Naive thymus-derived CD4-positive, alpha-beta T cell (primary cell): ENCODE measurements at regions of chr19 and their contacts with region 1.

Region 1: DNA sequence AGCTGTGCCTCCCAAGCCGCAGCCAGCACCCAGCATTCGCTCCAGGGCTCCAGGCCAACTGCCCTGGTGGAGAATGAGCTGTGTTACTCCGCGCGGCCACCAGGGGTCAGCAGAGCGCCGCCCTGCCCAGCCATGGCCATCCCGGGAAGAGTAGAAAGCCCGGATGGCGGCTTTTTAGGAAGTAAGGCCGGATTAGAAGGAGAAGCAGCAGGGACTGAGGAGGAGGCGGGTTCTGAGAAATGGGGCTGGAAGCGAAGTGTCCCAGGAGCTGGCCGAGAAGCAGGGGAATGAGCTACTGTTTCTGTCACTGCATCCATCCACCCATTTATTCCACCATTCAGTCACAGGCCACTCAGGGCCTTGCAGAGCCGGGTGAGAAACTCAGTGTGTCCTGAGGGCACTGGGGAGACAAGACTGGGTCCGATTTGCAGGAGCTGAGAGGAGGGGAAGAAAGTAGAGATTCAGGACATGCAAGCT is 6.6 kb upstream of the NPAS1 start:
- DNase-seq: peak in 8 of 9 donors; percentile 30 to 76 (median 55)
- ATAC-seq: peak; percentile 92
- H3K4me3 ChIP-seq: no peak overlapping the region
- H3K4me3 Mint-ChIP-seq: peak overlapping the region in 1 of 10 donors; percentile 12
- H3K27ac ChIP-seq: no peak overlapping the region
- H3K27ac Mint-ChIP-seq: peak overlapping the region in 1 of 9 donors; percentile 71
- H3K4me1 ChIP-seq: peaks cover 0 to 3% of the 10 kb centered on the region in 2 donors
- H3K4me1 Mint-ChIP-seq: peaks cover 5 to 11% (median 9%) of the 10 kb centered on the region in 7 donors
- H3K27me3 ChIP-seq: no peaks in the 10 kb centered on the region
- H3K27me3 Mint-ChIP-seq: peaks cover 9 to 21% (median 11%) of the 10 kb centered on the region in 5 donors

Region 2: GRCh38 chr19:46970815-46971214 is 42.3 kb before region 1 on chr19:
- CTCF ChIA-PET with region 1: no interaction called
- POLR2A ChIA-PET with region 1: no interaction called
- intact Hi-C with region 1: no loop called
- DNase-seq: no peak
- ATAC-seq: no peak
- H3K4me3 ChIP-seq: no peak overlapping the region
- H3K4me3 Mint-ChIP-seq: no peak overlapping the region
- H3K27ac ChIP-seq: no peak overlapping the region
- H3K27ac Mint-ChIP-seq: no peak overlapping the region
- H3K4me1 ChIP-seq: peaks cover 11 to 26% of the 10 kb centered on the region in 2 donors
- H3K4me1 Mint-ChIP-seq: peaks cover 17 to 28% (median 21%) of the 10 kb centered on the region in 7 donors
- H3K27me3 ChIP-seq: no peaks in the 10 kb centered on the region
- H3K27me3 Mint-ChIP-seq: no peaks in the 10 kb centered on the region

Region 3: DNA sequence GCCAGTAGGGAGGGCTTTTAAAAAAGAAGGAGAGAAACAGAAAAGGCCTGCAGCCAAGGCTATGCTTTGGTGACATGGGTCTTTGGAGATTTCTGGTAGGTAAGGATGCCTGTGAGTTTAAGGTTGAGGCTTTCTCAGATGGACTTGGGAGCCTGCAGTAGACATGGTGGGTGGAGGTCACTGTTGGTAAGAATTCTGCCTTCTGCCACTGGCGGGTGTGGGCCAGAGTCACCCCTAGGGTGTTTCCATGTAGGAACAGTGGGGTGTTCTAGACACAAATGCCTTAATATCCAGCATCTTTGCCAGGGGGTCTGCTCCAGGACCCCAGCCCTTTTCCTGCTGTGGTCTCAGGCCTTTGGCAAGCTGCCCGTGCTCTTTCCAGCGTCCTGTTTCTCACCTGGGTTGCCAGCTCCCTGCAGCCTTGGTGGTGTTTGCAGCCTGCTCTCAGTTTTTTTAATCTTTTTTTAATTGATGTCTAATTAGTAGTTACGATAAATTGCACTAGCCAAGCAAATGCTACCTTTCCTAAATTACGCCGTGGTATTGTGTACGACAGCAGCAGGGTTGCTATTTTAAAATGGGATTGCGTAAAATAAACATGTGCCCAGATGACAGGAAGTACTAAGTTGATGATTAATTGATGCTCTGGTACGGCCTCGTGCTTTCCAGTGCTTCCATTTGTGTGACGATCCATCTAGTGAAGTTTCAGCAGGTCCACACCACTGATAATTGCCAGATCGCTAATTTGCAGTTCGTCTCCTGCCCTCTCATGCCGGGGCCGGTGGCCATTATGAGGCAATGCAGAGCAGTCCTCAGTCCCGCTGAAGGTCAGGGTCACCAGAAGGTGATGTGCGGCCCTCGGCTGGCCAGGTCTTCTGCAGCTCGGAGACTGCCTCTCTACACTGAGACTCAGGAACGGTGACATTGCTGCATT is 28.7 kb before region 1 on chr19:
- CTCF ChIA-PET with region 1: no interaction called
- POLR2A ChIA-PET with region 1: no interaction called
- intact Hi-C with region 1: no loop called
- DNase-seq: no peak
- ATAC-seq: peak; percentile 59
- H3K4me3 ChIP-seq: no peak overlapping the region
- H3K4me3 Mint-ChIP-seq: no peak overlapping the region
- H3K27ac ChIP-seq: no peak overlapping the region
- H3K27ac Mint-ChIP-seq: peak overlapping the region in 1 of 9 donors; percentile 41
- H3K4me1 ChIP-seq: peaks cover 0 to 8% of the 10 kb centered on the region in 2 donors
- H3K4me1 Mint-ChIP-seq: peaks cover 9 to 19% (median 17%) of the 10 kb centered on the region in 7 donors
- H3K27me3 ChIP-seq: no peaks in the 10 kb centered on the region
- H3K27me3 Mint-ChIP-seq: no peaks in the 10 kb centered on the region

Region 4: GRCh38 chr19:47002107-47002766 is 10.8 kb before region 1 on chr19:
- CTCF ChIA-PET with region 1: interaction called, 11 read pairs
- POLR2A ChIA-PET with region 1: no interaction called
- intact Hi-C with region 1: no loop called
- DNase-seq: no peak
- ATAC-seq: no peak
- H3K4me3 ChIP-seq: no peak overlapping the region
- H3K4me3 Mint-ChIP-seq: no peak overlapping the region
- H3K27ac ChIP-seq: no peak overlapping the region
- H3K27ac Mint-ChIP-seq: no peak overlapping the region
- H3K4me1 ChIP-seq: no peaks in the 10 kb centered on the region
- H3K4me1 Mint-ChIP-seq: peaks cover 0 to 14% (median 8%) of the 10 kb centered on the region in 7 donors
- H3K27me3 ChIP-seq: no peaks in the 10 kb centered on the region
- H3K27me3 Mint-ChIP-seq: peaks cover 0 to 32% (median 4%) of the 10 kb centered on the region in 5 donors

Region 5: DNA sequence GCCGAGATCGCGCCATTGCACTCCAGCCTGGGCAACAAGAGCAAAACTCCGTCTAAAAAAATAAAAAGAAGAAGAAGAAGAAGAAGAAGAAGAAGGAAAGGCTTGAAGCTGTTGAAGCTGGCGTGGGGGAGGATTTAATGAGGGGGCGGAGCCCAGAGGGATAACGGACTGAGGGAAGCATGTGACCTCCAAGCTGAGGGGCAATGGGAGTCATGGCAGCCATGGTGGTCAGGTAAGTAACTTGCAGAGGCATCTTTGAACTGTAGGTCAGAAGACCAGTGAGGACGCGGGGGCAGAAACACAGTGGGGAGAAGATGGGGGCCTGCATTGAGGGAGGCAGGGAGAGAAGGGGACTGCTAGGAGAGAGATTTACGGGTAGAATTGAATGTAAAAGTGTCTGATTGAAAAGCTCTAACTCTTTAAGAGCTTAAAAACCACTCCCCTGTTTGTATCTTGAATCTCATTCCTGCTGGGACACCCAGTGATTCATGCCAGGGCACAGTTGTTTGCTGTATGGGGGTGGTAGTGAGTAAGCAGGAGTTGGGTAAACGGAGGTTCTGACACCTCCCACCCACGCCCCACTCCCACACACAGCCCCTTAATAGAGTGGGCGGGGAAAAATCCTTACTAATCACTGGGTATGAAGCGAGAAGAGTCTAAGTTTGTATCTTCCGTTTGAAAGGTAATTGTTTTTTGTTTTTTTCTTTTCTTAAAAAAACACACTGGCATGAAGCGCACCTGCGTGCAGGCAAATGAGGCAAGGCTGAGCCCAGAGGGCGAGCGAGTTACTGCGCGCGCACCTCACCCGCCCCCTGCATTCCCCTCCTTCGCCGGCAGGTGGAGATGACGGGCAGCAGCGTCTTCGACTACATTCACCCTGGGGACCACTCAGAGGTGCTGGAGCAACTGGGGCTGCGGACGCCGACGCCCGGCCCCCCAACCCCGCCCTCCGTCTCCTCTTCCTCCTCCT is 22.3 kb after region 1 on chr19:
- CTCF ChIA-PET with region 1: interaction called, 16 read pairs
- POLR2A ChIA-PET with region 1: no interaction called
- intact Hi-C with region 1: loop called (anchors 1 kb)
- DNase-seq: peak; percentile 91 to 100 (median 97)
- ATAC-seq: peak; percentile 99
- H3K4me3 ChIP-seq: peak overlapping the region; percentile 74
- H3K4me3 Mint-ChIP-seq: peak overlapping the region; percentile 83 to 97 (median 92)
- H3K27ac ChIP-seq: peak overlapping the region; percentile 62
- H3K27ac Mint-ChIP-seq: peak overlapping the region; percentile 71 to 93 (median 85)
- H3K4me1 ChIP-seq: peaks cover 11 to 13% of the 10 kb centered on the region in 2 donors
- H3K4me1 Mint-ChIP-seq: peaks cover 7 to 23% (median 16%) of the 10 kb centered on the region in 7 donors
- H3K27me3 ChIP-seq: no peaks in the 10 kb centered on the region
- H3K27me3 Mint-ChIP-seq: peaks cover 6 to 26% (median 14%) of the 10 kb centered on the region in 5 donors

Region 6: DNA sequence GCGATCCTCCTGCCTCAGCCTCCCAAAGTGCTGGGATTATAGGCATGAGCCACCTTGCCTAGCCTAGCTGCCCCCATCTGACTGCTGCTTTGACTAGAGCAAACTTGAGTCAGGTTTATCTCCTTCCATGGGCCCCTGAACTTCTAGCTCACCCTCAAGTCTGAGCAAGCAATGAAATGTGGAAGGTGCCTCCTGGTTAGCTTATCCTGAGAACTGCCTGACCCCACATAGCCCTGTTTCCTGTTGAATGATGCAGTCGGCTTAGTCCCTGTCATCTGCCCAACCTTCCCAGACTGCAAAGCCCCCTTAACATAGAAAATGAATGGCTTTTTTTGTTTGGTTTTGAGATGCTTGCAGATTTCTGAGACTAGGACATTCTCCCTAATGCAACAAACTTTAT is 44.2 kb after region 1 on chr19:
- CTCF ChIA-PET with region 1: no interaction called
- POLR2A ChIA-PET with region 1: no interaction called
- intact Hi-C with region 1: no loop called
- DNase-seq: no peak
- ATAC-seq: no peak
- H3K4me3 ChIP-seq: no peak overlapping the region
- H3K4me3 Mint-ChIP-seq: no peak overlapping the region
- H3K27ac ChIP-seq: no peak overlapping the region
- H3K27ac Mint-ChIP-seq: no peak overlapping the region
- H3K4me1 ChIP-seq: no peaks in the 10 kb centered on the region
- H3K4me1 Mint-ChIP-seq: peaks cover 0 to 1% (median 0%) of the 10 kb centered on the region in 7 donors
- H3K27me3 ChIP-seq: no peaks in the 10 kb centered on the region
- H3K27me3 Mint-ChIP-seq: peaks cover 0 to 14% (median 0%) of the 10 kb centered on the region in 5 donors

Region 7: GRCh38 chr19:47483800-47484690 is 471.0 kb after region 1 on chr19 and contains the start of gene KPTN:
- CTCF ChIA-PET with region 1: no interaction called
- POLR2A ChIA-PET with region 1: no interaction called
- intact Hi-C with region 1: no loop called
- DNase-seq: peak; percentile 85 to 92 (median 88)
- ATAC-seq: peak; percentile 91
- H3K4me3 ChIP-seq: peak within 1 kb of the TSS; percentile 74
- H3K4me3 Mint-ChIP-seq: peak within 1 kb of the TSS; percentile 83 to 99 (median 96)
- H3K27ac ChIP-seq: peak within 1 kb of the TSS; percentile 96
- H3K27ac Mint-ChIP-seq: peak within 1 kb of the TSS; percentile 94 to 99 (median 97)
- H3K4me1 ChIP-seq: peaks cover 18% of the 10 kb centered on the region in 2 donors
- H3K4me1 Mint-ChIP-seq: peaks cover 22 to 39% (median 30%) of the 10 kb centered on the region in 7 donors
- H3K27me3 ChIP-seq: no peaks in the 10 kb centered on the region
- H3K27me3 Mint-ChIP-seq: peaks cover 0 to 4% (median 0%) of the 10 kb centered on the region in 5 donors
- total RNA-seq, gene KPTN: 5.1 to 9.2 (median 6.7) TPM